ENCODE measurements at regions of chr2 and their contacts with region 1.

Region 1: GRCh38 chr2:161273038-161273760 is 35.0 kb upstream of the PSMD14 start:
- DNase-seq: no peak
- ATAC-seq: peak in 2 of 4 donors; percentile 46 to 69
- H3K4me3 ChIP-seq: no peak overlapping the region
- H3K27ac ChIP-seq: no peak overlapping the region
- H3K4me1 ChIP-seq: no peaks in the 10 kb centered on the region
- H3K27me3 ChIP-seq: no peaks in the 10 kb centered on the region
- CTCF ChIP-seq: peak; percentile 81

Region 2: DNA sequence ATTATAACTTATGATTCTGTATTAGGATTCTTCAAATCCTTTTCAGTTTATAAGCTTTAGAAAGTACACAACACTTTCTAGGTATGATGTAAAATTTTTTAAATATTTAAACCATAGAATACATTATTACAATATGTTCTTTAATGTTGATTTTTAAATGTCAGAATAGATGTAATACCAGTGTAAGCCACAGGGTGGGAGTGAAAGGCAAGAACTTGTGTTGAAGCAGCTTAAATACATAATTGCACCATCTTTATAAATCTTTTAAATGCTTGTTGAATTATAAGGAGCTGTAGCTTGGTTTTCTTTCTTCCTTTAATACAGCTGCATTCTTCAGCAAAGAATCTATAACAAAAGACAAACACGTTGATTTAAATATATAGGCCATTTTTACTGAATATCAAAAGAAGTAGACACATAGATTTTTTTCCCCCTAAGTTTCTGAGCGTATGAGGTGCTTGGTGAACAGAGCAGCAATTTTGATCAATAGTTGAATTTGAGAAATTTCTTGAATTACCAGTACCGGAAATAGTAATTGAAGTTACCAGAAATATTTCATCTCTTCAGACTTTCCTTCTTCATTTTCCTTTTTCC is 50.0 kb before region 1 on chr2:
- intact Hi-C with region 1: loop called (anchors 5 kb)
- DNase-seq: no peak
- ATAC-seq: peak in 2 of 4 donors; percentile 54 to 73
- H3K4me3 ChIP-seq: no peak overlapping the region
- H3K27ac ChIP-seq: no peak overlapping the region
- H3K4me1 ChIP-seq: no peaks in the 10 kb centered on the region
- H3K27me3 ChIP-seq: no peaks in the 10 kb centered on the region
- CTCF ChIP-seq: peak; percentile 81

Region 3: DNA sequence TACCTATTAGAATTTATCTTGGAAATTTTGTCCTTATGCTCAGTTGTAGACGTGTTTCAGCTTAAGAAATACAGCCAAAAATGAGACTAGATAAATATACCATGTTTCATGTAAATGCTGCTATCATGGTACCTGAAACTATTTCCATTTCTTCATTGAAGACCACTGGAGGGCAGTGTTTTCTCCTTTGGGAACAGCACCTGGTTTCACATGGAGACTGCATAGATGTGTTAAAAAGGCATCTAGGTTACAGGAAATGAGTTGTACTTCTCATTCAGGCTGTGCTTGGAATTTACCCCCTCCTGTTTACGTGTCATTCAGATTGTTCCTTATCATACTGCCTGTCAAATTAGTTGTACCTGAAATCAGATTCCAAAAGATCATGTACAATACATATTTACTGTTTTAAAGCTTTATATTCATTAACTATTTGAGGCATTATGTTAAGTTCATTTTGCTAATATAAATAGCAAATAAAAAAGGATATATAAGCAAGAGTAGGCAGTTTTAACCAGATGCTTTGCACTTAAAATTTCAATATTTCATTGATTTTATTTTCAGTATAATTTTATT is 22.2 kb before region 1 on chr2:
- intact Hi-C with region 1: loop called in 1 of 2 experiments (anchors 2 kb)
- DNase-seq: no peak
- ATAC-seq: peak; percentile 61 to 82 (median 76)
- H3K4me3 ChIP-seq: no peak overlapping the region
- H3K27ac ChIP-seq: no peak overlapping the region
- H3K4me1 ChIP-seq: no peaks in the 10 kb centered on the region
- H3K27me3 ChIP-seq: peaks cover 0 to 4% (median 0%) of the 10 kb centered on the region in 3 donors
- CTCF ChIP-seq: peak; percentile 63

Measured in psoas muscle (tissue), 8 donors.